ENCODE measurements at regions of chr22 and their contacts with region 1.

Region 1: DNA sequence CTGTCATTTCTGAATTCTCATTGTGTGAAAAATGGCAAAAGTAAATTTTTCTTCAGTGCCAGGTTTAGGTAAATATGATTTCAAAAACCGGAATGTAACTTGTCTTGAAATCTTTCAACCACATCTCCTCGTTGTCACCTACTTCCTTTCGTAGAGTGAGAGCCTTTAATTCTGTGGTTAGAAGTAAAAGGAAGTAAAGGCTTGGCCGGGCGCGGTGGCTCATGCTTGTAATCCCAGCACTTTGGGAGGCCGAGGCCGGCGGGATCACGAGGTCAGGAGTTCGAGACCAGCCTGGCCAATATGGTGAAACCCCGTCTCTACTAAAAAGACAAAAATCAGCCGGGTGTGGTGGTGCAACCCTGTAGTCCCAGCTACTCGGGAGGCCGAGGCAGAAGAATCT is 29.8 kb downstream of the SGSM3 start:
- DNase-seq: peak in 8 of 9 donors; percentile 36 to 75 (median 62)
- ATAC-seq: peak; percentile 68
- H3K4me3 ChIP-seq: no peak overlapping the region
- H3K4me3 Mint-ChIP-seq: peak overlapping the region; percentile 72 to 84 (median 81)
- H3K27ac ChIP-seq: peak overlapping the region; percentile 57
- H3K27ac Mint-ChIP-seq: peak overlapping the region; percentile 86 to 96 (median 94)
- H3K4me1 ChIP-seq: peaks cover 51 to 65% of the 10 kb centered on the region in 2 donors
- H3K4me1 Mint-ChIP-seq: peaks cover 60 to 92% (median 82%) of the 10 kb centered on the region in 7 donors
- H3K27me3 ChIP-seq: no peaks in the 10 kb centered on the region
- H3K27me3 Mint-ChIP-seq: no peaks in the 10 kb centered on the region

Region 2: GRCh38 chr22:40276996-40277823 is 122.9 kb before region 1 on chr22:
- CTCF ChIA-PET with region 1: no interaction called
- POLR2A ChIA-PET with region 1: no interaction called
- intact Hi-C with region 1: no loop called
- DNase-seq: no peak
- ATAC-seq: no peak
- H3K4me3 ChIP-seq: peak overlapping the region; percentile 40
- H3K4me3 Mint-ChIP-seq: peak overlapping the region in 6 of 10 donors; percentile 1 to 88 (median 64)
- H3K27ac ChIP-seq: peak overlapping the region; percentile 82
- H3K27ac Mint-ChIP-seq: peak overlapping the region; percentile 57 to 97 (median 89)
- H3K4me1 ChIP-seq: peaks cover 0 to 35% of the 10 kb centered on the region in 2 donors
- H3K4me1 Mint-ChIP-seq: peaks cover 23 to 89% (median 69%) of the 10 kb centered on the region in 7 donors
- H3K27me3 ChIP-seq: no peaks in the 10 kb centered on the region
- H3K27me3 Mint-ChIP-seq: no peaks in the 10 kb centered on the region

Region 3: DNA sequence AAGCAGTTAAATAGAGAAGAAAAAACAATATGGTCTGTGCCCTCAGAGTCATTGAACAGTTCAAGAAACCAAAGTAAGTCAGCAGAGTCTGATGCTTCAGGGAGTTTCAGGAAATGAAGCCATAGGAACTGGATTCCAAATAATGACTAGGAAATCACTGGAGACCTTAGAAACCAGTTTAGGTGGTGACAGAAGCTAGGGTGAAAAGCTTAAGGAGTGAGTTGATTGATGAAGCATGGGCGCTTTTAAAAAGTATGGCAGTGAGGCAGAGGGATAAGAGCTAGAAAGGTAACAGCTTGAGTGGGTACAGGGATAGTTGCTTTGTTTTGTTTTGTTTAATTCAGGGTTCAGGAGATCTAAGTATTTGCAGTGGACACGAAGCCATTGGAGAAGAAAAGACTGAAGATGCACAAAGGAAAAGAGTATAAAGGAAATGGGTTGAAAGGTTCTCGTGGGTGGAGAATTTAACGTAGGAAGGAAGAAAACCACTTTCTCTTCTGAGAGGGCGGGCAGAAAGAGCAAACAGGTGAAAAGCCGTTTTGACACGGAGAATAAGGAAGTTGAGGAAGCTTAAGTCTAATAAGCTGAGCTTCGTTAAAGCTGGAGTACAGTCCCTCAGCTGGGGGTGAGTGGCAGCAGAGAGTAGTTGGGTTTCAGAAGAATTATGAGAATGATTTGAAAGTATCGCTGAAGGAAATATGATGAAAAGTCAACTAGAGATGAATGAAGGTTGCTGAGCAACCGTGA is 14.9 kb before region 1 on chr22:
- CTCF ChIA-PET with region 1: interaction called, 11 read pairs
- POLR2A ChIA-PET with region 1: interaction called, 13 read pairs
- intact Hi-C with region 1: loop called (anchors 1 kb)
- DNase-seq: peak in 7 of 9 donors; percentile 51 to 78 (median 73)
- ATAC-seq: peak; percentile 96
- H3K4me3 ChIP-seq: peak overlapping the region; percentile 62
- H3K4me3 Mint-ChIP-seq: peak overlapping the region; percentile 76 to 90 (median 86)
- H3K27ac ChIP-seq: peak overlapping the region; percentile 78
- H3K27ac Mint-ChIP-seq: peak overlapping the region; percentile 90 to 99 (median 97)
- H3K4me1 ChIP-seq: peaks cover 10 to 61% of the 10 kb centered on the region in 2 donors
- H3K4me1 Mint-ChIP-seq: peaks cover 37 to 79% (median 71%) of the 10 kb centered on the region in 7 donors
- H3K27me3 ChIP-seq: no peaks in the 10 kb centered on the region
- H3K27me3 Mint-ChIP-seq: no peaks in the 10 kb centered on the region

Region 4: GRCh38 chr22:40415531-40416266 is 15.5 kb after region 1 on chr22:
- CTCF ChIA-PET with region 1: interaction called, 4 read pairs
- POLR2A ChIA-PET with region 1: interaction called, 3 read pairs
- intact Hi-C with region 1: loop called in 1 of 2 experiments (anchors 2 kb)
- DNase-seq: peak in 1 of 9 donors; percentile 19
- ATAC-seq: peak; percentile 70
- H3K4me3 ChIP-seq: no peak overlapping the region
- H3K4me3 Mint-ChIP-seq: peak overlapping the region in 8 of 10 donors; percentile 16 to 69 (median 54)
- H3K27ac ChIP-seq: peak overlapping the region; percentile 56
- H3K27ac Mint-ChIP-seq: peak overlapping the region; percentile 88 to 96 (median 93)
- H3K4me1 ChIP-seq: peaks cover 0 to 16% of the 10 kb centered on the region in 2 donors
- H3K4me1 Mint-ChIP-seq: peaks cover 19 to 44% (median 36%) of the 10 kb centered on the region in 7 donors
- H3K27me3 ChIP-seq: no peaks in the 10 kb centered on the region
- H3K27me3 Mint-ChIP-seq: no peaks in the 10 kb centered on the region